ENCODE measurements at regions of chr12 and their contacts with region 1.

Region 1: DNA sequence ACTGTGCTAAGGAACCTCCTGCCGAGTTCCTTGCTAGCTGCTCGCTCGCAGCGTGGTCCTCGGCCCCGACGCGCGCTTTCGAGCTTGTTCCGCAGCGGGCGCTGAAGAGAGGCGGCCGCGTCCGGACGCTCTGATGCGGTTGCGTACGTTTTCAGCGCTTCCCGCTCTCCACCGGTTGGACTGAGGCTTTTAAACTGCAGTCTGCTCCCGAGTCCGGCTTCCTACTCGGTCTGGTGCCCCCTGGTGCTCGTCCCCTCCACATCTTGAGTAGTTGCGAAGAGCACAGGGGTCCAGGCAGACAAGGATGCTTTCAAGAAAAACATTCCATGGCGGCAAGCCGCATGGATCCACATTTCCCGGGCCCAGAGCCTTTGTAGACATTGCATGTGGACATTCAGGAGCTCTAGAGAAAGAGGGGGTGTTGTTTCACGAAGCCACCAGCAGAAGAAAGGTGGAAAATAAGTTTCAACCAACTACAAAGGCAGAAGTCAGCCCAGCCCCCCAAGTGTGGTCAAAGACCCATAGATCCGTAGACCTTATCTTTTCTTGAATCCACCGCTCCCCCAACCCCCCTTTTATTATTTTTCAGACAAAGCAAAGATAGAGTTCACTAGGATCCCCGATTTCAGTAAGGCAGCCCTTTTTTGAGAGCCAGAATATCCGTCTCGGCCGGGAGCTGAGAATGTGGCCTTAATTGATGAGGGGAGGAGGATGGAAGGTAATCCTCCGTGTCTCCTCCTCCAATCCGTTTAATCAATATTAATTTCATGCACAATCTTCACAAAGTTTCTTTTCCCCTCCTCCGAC is 984 bp upstream of the WNK1 start:
- DNase-seq: peak; percentile 94
- H3K4me3 Mint-ChIP-seq: no peak overlapping the region
- H3K27ac Mint-ChIP-seq: no peak overlapping the region
- H3K4me1 Mint-ChIP-seq: peaks cover 11% of the 10 kb centered on the region
- H3K27me3 Mint-ChIP-seq: no peaks in the 10 kb centered on the region
- CTCF ChIP-seq: peak; percentile 74

Region 2: GRCh38 chr12:575948-576612 is 175.3 kb before region 1 on chr12:
- CTCF ChIA-PET with region 1: interaction called, 25 read pairs
- intact Hi-C with region 1: loop called (anchors 2 kb)
- DNase-seq: peak; percentile 90
- H3K4me3 Mint-ChIP-seq: peak overlapping the region; percentile 33
- H3K27ac Mint-ChIP-seq: no peak overlapping the region
- H3K4me1 Mint-ChIP-seq: peaks cover 26% of the 10 kb centered on the region
- H3K27me3 Mint-ChIP-seq: peaks cover 18% of the 10 kb centered on the region
- CTCF ChIP-seq: peak; percentile 98

Region 3: DNA sequence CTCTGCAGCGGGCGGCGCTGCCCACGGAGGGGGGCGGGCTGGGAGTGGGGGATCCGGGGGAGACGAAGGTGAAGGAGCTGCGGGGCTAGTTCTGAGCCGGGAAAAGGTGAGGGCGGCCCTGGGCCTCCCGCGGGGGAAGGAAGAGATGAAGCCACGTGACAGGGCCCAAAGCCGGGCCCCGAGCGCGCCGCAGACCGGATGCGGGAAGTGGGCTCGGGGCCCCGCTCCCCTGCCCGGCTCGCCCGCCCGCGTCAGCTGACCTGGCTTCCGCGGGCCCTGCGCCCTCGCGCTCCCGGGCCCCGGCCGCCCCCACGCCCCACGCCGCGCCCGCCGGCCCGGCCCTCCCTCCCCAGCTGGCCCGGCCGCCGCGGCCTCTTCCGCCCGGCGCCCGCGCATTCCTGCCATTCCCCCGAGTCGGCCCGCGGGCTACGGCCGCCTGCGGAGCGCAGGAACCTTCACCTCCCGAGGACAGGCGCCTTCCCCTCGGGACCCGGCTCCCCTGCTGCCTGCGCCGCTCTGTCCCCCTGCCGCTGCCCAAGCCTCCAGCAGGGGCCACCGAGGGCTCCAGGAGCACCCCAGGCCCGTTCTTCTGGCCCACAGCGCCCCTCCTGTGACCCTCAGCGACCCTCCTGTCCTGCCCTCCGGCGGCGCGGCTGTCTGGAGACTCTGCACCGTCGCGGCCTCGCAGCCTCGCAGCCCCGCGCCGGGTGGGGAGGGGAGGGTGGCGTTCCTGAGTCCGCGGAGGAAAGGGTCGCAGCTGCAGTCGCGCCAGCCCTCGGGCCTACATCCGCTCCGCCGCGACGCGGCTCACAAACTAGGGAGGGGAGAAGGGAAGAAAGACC is 108.5 kb before region 1 on chr12:
- CTCF ChIA-PET with region 1: no interaction called
- intact Hi-C with region 1: loop called (anchors 10 kb)
- DNase-seq: peak; percentile 69
- H3K4me3 Mint-ChIP-seq: peak overlapping the region; percentile 73
- H3K27ac Mint-ChIP-seq: peak overlapping the region; percentile 47
- H3K4me1 Mint-ChIP-seq: peaks cover 11% of the 10 kb centered on the region
- H3K27me3 Mint-ChIP-seq: no peaks in the 10 kb centered on the region
- CTCF ChIP-seq: peak; percentile 41

Region 4: GRCh38 chr12:779745-780734 is 28.6 kb after region 1 on chr12:
- CTCF ChIA-PET with region 1: interaction called, 21 read pairs
- intact Hi-C with region 1: no loop called
- DNase-seq: no peak
- H3K4me3 Mint-ChIP-seq: peak overlapping the region; percentile 52
- H3K27ac Mint-ChIP-seq: peak overlapping the region; percentile 58
- H3K4me1 Mint-ChIP-seq: peaks cover 42% of the 10 kb centered on the region
- H3K27me3 Mint-ChIP-seq: no peaks in the 10 kb centered on the region
- CTCF ChIP-seq: no peak

Region 5: DNA sequence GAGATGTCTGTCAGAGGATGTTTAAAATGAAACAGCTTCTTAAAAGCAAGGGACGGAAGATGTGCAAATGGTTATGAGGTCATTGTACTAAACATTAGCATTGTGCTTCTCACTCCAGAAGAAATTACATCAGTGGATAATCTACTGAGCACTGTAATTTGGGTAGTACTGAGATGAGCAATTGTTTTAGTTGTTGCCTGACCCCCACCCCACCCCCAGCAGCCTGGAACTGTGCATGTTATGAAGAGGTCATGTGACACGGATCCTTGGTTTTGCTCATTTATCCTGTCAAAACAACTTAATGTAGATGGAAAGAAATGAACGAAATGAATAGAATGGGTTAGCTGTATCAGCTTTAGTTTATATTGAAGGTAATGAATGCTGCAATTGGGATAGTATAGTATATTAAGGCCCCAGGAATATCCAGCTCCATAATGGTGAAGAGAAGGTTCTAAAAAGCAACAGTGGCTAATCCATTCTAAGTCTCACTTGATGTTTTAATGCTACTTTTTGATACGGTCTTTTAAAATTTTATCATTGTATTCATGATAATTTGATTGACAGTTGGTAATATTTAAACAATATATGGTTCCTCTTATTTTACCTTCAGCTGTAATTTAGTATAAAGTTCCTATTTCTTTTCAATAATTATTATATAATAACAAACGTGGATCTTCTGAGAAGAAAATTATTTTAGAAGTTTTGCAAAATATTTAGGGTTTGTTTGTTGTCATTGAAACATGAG is 59.4 kb after region 1 on chr12:
- CTCF ChIA-PET with region 1: interaction called, 5 read pairs
- intact Hi-C with region 1: loop called (anchors 2 kb)
- DNase-seq: no peak
- H3K4me3 Mint-ChIP-seq: no peak overlapping the region
- H3K27ac Mint-ChIP-seq: no peak overlapping the region
- H3K4me1 Mint-ChIP-seq: peaks cover 21% of the 10 kb centered on the region
- H3K27me3 Mint-ChIP-seq: no peaks in the 10 kb centered on the region
- CTCF ChIP-seq: no peak

Region 6: GRCh38 chr12:1034751-1035457 is 283.5 kb after region 1 on chr12:
- CTCF ChIA-PET with region 1: no interaction called
- intact Hi-C with region 1: no loop called
- DNase-seq: no peak
- H3K4me3 Mint-ChIP-seq: no peak overlapping the region
- H3K27ac Mint-ChIP-seq: no peak overlapping the region
- H3K4me1 Mint-ChIP-seq: no peaks in the 10 kb centered on the region
- H3K27me3 Mint-ChIP-seq: no peaks in the 10 kb centered on the region
- CTCF ChIP-seq: no peak